Cardiac septum (tissue), 1 donor: ENCODE measurements at regions of chr6 and their contacts with region 1.

Region 1: DNA sequence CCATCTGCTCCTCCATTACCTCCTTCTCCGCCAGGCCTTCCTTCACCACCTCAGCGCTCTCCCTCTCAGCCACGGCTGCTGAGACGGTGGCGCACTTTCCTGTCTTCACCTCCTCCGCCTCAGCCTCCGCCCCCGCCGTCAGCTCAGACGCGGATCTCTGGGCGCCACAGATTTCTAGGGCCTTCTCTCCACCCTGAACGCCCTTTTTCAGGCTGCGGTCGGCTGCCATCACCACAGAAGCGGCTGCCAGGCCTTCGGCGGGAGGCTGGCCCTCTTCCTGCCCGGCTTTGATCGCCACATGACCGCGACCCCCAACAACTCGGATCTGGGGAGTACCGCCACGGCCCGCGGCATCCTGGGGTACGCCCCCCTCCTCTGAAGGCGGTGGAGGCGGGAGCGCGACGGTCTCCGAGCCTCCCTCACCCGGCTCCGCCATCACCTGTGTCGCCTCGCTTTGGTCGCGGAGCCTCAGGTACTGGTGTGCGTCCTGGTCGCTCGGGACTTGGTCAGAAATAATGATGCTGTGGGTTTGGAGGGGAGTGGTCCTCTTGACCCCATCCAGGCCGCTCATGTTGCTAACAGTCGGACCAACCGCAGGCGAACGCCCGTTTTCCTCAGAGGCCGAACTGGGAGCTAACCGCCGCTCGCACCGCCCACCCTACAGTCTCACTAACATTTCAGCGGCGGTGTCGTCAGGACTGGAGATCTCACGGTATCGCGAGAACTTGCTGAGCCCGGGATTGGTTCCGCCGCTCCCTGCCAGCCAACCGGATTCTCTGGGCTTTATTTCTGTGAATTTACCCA is at the start of gene TSPYL1:
- DNase-seq: peak; percentile 97
- total RNA-seq, gene TSPYL1: 125 TPM

Region 2: DNA sequence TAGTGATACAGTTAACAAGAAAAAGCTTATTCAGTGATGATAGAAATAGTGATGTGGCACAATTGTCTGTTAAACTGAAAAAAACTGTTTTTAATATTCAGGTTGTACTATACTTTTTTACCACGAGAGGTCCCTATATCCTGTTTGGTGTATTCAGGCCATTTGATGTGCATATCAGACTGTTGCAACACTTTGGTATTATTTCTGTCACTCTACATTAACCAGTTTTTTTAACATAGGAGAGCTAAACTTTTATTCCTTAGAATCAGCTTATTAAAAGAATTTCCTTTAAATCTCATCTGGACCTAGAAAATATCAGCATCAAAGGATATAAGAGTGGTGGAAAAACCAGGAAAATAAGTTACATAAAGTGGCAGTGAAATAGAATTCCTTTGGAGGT is 62.4 kb before region 1 on chr6:
- intact Hi-C with region 1: loop called (anchors 5 kb)
- DNase-seq: no peak

Region 3: GRCh38 chr6:116253505-116254296 is 25.8 kb before region 1 on chr6 and contains the start of gene TSPYL4:
- intact Hi-C with region 1: loop called (anchors 1 kb)
- DNase-seq: peak; percentile 97
- total RNA-seq, gene TSPYL4: 29.7 TPM

Region 4: DNA sequence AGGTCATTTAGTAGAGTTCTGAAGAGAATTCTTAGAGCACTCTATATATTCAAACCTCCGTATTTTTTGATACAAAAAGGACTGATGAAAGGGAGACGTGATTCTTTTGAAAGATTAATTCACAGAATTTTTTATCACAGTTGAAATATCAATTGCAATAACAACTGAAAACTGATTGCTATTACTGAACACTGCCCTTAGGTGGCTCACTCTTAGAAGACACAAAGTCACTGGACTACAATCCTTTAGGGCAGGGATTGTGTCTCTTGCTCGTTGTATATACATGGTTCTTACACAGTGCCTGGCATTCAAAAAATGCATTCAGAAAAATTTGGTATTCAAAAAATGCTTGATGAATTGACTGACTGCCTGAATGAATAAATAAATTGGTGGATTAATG is 164.6 kb after region 1 on chr6:
- intact Hi-C with region 1: loop called (anchors 10 kb)
- DNase-seq: no peak

Region 5: GRCh38 chr6:116570856-116571682 is 291.6 kb after region 1 on chr6 and contains the start of gene RWDD1:
- intact Hi-C with region 1: loop called (anchors 2 kb)
- DNase-seq: peak; percentile 100
- total RNA-seq, gene RWDD1: 52.9 TPM